WTC11 (cell line): ENCODE measurements at regions of chr19 and their contacts with region 1.

Region 1: DNA sequence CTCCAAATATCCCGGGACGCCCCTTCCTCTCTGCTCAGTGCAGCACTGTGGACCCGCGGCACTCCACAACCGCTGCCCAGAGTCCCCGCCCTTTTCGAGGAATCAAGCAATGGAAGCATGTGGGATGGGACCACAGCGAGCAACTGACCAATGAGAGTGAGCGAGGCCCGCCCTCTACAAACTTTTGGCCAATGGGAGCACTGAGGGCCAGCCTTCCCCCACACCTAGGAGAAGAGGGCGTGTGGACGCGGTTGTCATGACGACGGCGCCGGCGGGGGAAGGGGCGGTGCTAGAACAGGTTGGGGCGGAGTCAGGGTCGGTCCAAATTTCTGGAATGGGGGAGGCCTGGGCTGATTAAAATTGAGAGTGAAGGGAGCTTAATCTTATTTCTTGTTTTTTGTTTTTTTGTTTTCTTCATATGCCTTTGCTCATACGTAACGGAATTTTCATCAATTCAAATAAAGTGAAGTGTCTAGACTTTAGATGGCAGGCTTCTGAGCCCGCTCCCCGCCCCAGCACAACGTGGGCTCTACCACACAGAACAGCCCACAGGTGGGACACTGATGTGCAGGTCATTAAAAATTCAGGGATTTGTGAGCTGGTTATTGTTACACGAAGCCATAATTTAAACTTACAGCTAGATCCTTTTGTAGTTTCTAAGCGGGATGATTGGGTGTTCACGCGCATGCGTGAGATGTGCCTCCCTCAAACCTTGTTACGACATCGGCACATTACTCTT is at the start of gene DNAAF3:
- DNase-seq: peak; percentile 98
- ATAC-seq: peak; percentile 95
- H3K4me3 Mint-ChIP-seq: peak within 1 kb of the TSS; percentile 94
- H3K27ac Mint-ChIP-seq: peak within 1 kb of the TSS; percentile 94
- H3K4me1 Mint-ChIP-seq: peaks cover 8% of the 10 kb centered on the region; the same call in 1 of the 2 replicates
- H3K27me3 Mint-ChIP-seq: peaks cover 71% of the 10 kb centered on the region
- CTCF ChIP-seq: no peak
- total RNA-seq, gene DNAAF3: 4.0 to 5.9 TPM (median 5.6 TPM) in 3 replicates

Region 2: DNA sequence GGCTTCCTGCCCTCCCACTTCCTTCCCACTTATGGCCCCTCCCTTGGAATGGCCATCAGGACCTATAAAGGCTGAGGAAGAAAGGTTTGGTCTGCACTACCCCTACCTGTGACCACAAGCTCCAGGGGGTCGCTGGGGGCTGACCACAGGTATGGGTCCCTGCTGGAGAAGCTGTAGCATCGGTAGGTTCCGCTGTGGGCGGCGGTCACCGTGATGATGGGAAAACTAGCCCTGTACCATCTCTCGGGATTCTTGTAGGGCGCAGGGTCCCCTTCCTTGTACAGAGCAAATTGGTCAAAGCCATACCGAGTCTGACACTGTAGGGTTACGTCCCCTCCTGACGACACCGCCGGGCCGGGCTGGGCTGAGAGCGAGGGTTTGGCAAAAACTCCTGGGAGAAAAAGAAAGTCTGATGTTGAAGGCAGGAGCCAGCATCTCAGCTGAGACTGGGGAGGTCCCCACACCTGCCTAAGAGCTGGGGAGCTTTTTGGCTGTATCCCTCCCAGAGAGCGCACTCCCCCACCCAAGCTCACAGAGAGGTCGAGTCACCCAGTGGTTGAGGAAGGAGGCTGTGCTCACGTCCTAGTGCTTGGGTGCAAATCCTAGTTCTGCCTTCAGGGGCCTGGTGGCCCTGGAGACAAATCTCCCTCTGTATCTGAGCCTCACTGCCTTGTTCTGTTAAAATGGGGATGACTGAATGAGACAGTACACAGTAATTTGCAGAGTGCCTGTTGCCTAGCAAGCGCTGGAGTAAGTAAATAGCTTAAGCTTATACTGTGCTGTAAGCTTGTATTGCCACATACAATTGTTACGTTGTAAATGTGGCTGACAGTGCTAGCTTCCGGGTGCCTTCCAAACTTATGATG is 139.0 kb before region 1 on chr19:
- CTCF ChIA-PET with region 1: no interaction called
- POLR2A ChIA-PET with region 1: no interaction called
- DNase-seq: no peak
- ATAC-seq: peak; percentile 41
- H3K4me3 Mint-ChIP-seq: no peak overlapping the region
- H3K27ac Mint-ChIP-seq: 0 out of 2 replicates have a peak overlapping the region, but pooled peaks have one; percentile 12
- H3K4me1 Mint-ChIP-seq: no peaks in the 10 kb centered on the region
- H3K27me3 Mint-ChIP-seq: no peaks in the 10 kb centered on the region
- CTCF ChIP-seq: no peak

Region 3: GRCh38 chr19:55117636-55118391 is 48.9 kb before region 1 on chr19 and contains the start of gene PPP1R12C:
- CTCF ChIA-PET with region 1: interaction called, 16 read pairs
- POLR2A ChIA-PET with region 1: no interaction called
- DNase-seq: peak; percentile 98
- ATAC-seq: peak; percentile 78
- H3K4me3 Mint-ChIP-seq: peak within 1 kb of the TSS; percentile 98
- H3K27ac Mint-ChIP-seq: peak within 1 kb of the TSS; percentile 97
- H3K4me1 Mint-ChIP-seq: peaks cover 31% of the 10 kb centered on the region
- H3K27me3 Mint-ChIP-seq: peaks cover 21% of the 10 kb centered on the region
- CTCF ChIP-seq: no peak
- total RNA-seq, gene PPP1R12C: 88.4 to 99.3 TPM (median 92.3 TPM) in 3 replicates

Region 4: DNA sequence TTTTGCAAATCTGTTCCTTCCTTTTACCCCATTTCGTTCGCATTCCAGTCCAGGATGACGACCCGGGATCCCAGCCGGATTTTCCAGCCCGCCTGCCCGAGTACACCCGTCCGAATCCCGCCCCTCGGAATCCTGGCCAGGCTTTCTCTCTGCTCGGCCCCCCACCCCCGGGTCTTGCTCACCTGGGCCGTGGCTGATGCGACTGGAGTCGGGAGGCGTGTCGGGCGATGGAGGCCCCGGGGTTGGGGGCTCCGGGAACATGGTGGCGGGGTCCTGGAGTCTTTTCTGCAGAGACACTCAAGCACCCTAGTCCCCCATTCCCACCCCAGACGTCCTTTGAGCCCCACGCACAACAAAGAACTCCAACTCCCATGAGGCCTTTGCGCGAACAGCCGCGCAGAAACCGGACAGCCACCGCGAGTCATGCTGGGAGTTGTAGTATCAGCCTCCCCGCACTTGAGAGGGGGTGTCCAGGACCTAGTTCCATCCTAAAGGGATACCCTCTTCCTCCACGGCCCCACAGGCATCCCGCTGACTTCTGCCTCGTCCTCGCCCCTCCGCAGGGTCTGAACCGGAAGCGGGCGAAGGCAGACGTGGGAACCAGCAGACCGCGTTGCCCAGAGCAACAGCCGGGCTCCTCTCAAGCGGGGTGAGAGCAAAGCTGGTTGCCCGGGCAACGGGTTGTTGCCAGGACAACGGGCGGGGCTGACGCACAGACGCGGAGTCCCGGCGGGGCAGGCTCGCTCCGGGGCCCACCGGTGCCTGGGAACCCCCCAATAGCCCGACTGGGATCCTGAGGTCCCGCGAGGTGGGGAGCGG is 12.3 kb after region 1 on chr19:
- CTCF ChIA-PET with region 1: interaction called, 15 read pairs
- POLR2A ChIA-PET with region 1: no interaction called
- DNase-seq: peak; percentile 93
- ATAC-seq: peak; percentile 65
- H3K4me3 Mint-ChIP-seq: peak overlapping the region; percentile 77
- H3K27ac Mint-ChIP-seq: peak overlapping the region; percentile 72; the same call in 1 of the 2 replicates
- H3K4me1 Mint-ChIP-seq: peaks cover 20% of the 10 kb centered on the region
- H3K27me3 Mint-ChIP-seq: peaks cover 92% of the 10 kb centered on the region
- CTCF ChIP-seq: no peak

Region 5: GRCh38 chr19:55258828-55259539 is 92.3 kb after region 1 on chr19 and contains the start of gene PPP6R1:
- CTCF ChIA-PET with region 1: interaction called, 14 read pairs
- POLR2A ChIA-PET with region 1: no interaction called
- DNase-seq: peak; percentile 97
- ATAC-seq: peak; percentile 83
- H3K4me3 Mint-ChIP-seq: peak within 1 kb of the TSS; percentile 95
- H3K27ac Mint-ChIP-seq: peak within 1 kb of the TSS; percentile 96
- H3K4me1 Mint-ChIP-seq: peaks cover 48% of the 10 kb centered on the region
- H3K27me3 Mint-ChIP-seq: no peaks in the 10 kb centered on the region
- CTCF ChIP-seq: no peak
- total RNA-seq, gene PPP6R1: 78.4 to 91.8 TPM (median 83.2 TPM) in 3 replicates

Region 6: DNA sequence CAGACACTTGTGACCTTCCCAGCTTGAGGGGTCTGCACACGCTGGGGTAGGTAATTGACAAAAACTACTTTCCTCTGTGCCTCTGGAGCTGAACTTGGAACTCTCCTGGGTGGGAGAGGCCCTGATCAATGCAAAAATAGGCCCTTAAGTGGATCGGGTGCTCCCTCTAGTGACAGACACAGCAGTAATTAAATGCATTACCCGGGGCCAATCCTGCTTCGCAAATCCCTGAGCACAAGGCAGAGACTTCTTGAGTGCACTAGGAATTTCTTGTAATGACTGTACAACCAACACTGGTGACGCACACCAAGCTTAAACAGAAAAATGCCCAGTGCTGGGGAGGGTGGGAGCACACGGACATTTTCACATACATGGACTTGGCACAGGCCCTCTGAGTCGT is 251.5 kb after region 1 on chr19:
- CTCF ChIA-PET with region 1: interaction called, 11 read pairs
- POLR2A ChIA-PET with region 1: no interaction called
- DNase-seq: peak; percentile 71
- ATAC-seq: peak; percentile 97
- H3K4me3 Mint-ChIP-seq: no peak overlapping the region
- H3K27ac Mint-ChIP-seq: no peak overlapping the region; the same call in 1 of the 2 replicates
- H3K4me1 Mint-ChIP-seq: peaks cover 2% of the 10 kb centered on the region
- H3K27me3 Mint-ChIP-seq: peaks cover 78% of the 10 kb centered on the region
- CTCF ChIP-seq: peak; percentile 40